ENCODE measurements at regions of chr5 and their contacts with region 1.

Region 1: DNA sequence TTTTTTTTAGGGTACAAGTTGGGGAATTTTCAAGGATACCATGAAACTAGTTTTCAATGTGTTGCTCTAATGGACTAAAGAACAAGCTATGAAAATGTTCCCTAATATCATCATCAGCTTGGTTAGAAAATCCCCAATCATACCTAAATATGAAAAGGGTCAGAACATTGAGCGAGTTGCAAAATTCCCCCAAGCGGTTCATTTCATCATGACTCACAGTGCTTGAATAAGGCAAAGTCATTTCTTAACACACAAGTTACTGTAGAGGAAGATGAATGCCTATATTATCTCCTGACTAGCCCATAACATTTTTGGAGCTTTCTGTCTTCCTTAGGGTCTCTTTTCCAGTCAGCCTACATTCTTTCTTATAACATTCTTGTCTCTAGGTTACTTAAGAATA is 62.7 kb downstream of the ST8SIA4 start:
- DNase-seq: peak; percentile 55
- ATAC-seq: peak; percentile 84
- H3K4me3 Mint-ChIP-seq: peak overlapping the region; percentile 33
- H3K27ac Mint-ChIP-seq: peak overlapping the region; percentile 87
- H3K4me1 Mint-ChIP-seq: peaks cover 71% of the 10 kb centered on the region
- H3K27me3 Mint-ChIP-seq: no peaks in the 10 kb centered on the region

Region 2: GRCh38 chr5:100322483-100322882 is 517.9 kb before region 1 on chr5:
- CTCF ChIA-PET with region 1: no interaction called
- POLR2A ChIA-PET with region 1: no interaction called
- intact Hi-C with region 1: no loop called
- DNase-seq: no peak
- ATAC-seq: no peak
- H3K4me3 Mint-ChIP-seq: no peak overlapping the region
- H3K27ac Mint-ChIP-seq: no peak overlapping the region
- H3K4me1 Mint-ChIP-seq: no peaks in the 10 kb centered on the region
- H3K27me3 Mint-ChIP-seq: no peaks in the 10 kb centered on the region

Region 3: DNA sequence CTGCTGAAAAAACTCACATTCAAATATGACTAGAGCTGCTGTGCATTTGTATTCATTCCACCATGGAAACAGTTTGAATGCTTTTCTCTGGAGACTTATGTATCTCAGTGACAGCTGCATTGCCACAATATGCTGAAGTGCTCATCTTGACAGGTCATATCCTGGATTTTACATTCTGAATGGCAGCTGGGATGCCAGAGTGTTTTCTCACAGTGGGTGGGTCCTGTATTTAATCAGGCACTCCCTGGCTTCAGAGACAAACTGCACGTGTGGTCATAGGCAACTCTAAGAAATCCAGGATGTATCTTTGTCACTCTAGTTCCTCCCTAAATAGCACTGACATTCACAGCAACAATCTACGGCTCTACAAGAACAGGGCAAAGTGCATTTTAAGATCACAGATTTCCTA is 12.9 kb before region 1 on chr5:
- CTCF ChIA-PET with region 1: interaction called, 4 read pairs
- POLR2A ChIA-PET with region 1: interaction called, 9 read pairs
- intact Hi-C with region 1: loop called in 1 of 2 experiments (anchors 1 kb)
- DNase-seq: no peak
- ATAC-seq: peak; percentile 31
- H3K4me3 Mint-ChIP-seq: no peak overlapping the region
- H3K27ac Mint-ChIP-seq: peak overlapping the region; percentile 85
- H3K4me1 Mint-ChIP-seq: peaks cover 42% of the 10 kb centered on the region
- H3K27me3 Mint-ChIP-seq: no peaks in the 10 kb centered on the region

Region 4: DNA sequence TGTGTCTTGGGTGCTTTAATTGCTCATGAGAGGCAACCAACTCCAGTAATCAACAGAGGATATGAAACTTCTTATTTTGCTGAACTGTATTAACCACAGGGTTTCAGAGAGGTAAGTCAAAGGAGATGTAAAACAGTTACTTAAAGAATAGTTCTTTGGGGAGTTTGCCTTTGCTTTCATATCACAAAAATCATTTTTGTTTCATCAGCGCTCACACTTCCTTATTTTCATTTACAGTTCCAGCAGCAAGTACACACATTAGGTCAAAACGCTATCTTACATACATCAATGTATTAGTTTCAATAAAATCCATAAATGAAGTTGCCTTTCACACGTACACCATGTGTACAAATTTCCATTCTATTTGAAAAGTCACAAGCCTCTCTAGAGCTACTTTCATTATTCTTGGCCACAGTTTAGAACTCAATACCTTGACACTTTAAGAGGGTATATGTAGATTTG is 12.6 kb after region 1 on chr5:
- CTCF ChIA-PET with region 1: interaction called, 19 read pairs
- POLR2A ChIA-PET with region 1: interaction called, 4 read pairs
- intact Hi-C with region 1: no loop called
- DNase-seq: no peak
- ATAC-seq: peak; percentile 88
- H3K4me3 Mint-ChIP-seq: peak overlapping the region; percentile 57
- H3K27ac Mint-ChIP-seq: peak overlapping the region; percentile 95
- H3K4me1 Mint-ChIP-seq: peaks cover 44% of the 10 kb centered on the region
- H3K27me3 Mint-ChIP-seq: no peaks in the 10 kb centered on the region

Measured in activated CD4-positive, alpha-beta T cell treated with anti-CD3 and anti-CD28 coated beads for 36 hours (primary cell).